ENCODE measurements at regions of chr6 and their contacts with region 1.

Region 1: DNA sequence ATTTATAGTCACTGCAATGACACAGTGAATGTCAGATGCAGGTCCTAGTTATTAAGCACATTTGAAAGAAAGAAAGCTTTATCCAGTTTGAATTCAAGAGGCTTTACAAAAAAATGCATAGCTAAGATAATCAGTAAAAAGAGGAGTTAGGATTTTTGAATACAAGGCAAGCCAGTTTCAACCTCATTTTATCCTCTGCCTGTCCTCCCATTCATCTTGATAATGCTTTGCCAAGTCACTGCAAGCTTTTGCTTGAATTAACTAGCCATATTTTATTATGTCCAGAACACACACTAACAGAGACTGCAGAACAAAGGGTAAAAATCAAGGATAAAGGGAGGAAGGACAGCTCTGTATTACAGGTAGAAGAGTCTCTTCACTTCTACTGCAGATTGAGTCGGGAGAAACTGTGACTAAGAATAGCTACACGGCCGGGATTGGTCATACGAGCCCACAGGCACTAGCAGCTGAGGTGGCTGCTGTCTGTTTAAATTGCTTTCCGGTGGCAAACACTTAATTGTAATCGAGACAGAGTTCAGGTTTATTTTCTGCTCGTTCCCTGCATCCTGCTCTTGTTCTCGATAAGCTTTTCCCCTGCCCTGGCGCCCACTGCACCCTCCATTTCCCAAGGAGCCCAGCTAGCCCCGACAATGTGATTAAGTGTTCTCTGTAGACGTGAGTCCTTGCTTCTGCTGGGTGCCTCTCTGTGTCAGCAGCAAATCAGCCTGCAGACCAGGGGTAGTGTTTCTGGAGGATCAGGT is 30.5 kb upstream of the AKAP12 start:
- DNase-seq: peak; percentile 24
- ATAC-seq: peak; percentile 82
- H3K4me3 ChIP-seq: peak overlapping the region; percentile 36 to 62 (median 37)
- H3K27ac ChIP-seq: peak overlapping the region; percentile 14
- H3K4me1 ChIP-seq: peaks cover 45% of the 10 kb centered on the region
- H3K27me3 ChIP-seq: no peaks in the 10 kb centered on the region
- CTCF ChIP-seq: no peak
- EP300 ChIP-seq: no peak
- POLR2A ChIP-seq: no peak
- RAD21 ChIP-seq: no peak

Region 2: DNA sequence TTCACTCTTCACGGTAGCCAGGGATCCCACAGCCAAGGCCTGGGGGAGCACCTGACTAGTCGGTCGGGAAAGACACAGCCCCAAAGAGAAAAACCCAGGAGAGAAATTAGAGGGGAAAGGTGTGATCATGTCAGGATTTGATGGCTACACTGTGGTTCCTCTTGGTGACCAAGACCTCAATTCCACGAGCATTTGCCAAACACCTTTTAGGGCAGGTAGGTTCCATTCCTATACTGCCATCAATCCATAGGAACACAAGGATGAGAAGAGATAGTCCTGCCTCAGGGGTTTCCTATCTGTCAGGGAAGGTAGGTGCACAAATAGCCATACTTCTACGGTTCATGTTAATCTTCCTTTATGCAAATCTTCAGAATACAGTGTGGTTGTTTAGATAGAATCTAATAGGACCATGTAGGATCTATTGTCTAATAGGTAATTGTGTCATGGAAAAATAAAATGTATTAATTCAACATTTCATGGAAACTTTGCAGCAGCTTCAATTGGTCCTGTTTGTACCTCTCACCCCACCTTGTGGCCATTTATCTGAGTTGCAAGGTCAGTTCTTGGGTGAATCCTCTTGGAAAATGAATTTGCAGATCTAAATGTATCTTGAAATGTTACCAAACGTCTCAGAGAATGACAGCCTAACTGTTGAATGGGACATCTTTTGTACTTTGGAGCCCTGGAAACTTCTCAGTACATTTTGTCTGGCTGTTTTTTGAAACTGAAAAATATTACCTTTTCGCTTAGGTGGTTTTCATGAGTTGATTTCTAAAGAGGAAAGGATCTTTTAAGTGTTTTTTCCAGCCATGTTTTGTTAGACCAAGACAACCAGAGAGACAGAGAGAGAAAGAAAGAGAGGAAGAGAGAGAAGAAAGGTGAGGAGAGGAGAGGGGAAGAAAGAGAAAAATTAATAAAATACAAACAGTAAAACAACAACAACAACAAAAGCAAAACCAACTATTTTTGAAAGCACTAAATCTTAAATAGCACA is 874.2 kb before region 1 on chr6:
- CTCF ChIA-PET with region 1: no interaction called
- POLR2A ChIA-PET with region 1: no interaction called
- in situ Hi-C with region 1: no loop called
- intact Hi-C with region 1: no loop called
- DNase-seq: peak; percentile 52
- ATAC-seq: peak; percentile 50; the same call in 1 of the 3 replicates
- H3K4me3 ChIP-seq: no peak overlapping the region
- H3K27ac ChIP-seq: no peak overlapping the region
- H3K4me1 ChIP-seq: no peaks in the 10 kb centered on the region
- H3K27me3 ChIP-seq: peaks cover 0 to 8% of the 10 kb centered on the region in 2 experiments; a peak in 2 of 5 replicates
- CTCF ChIP-seq: peak; percentile 73
- EP300 ChIP-seq: no peak
- POLR2A ChIP-seq: no peak
- RAD21 ChIP-seq: peak; percentile 71

Region 3: DNA sequence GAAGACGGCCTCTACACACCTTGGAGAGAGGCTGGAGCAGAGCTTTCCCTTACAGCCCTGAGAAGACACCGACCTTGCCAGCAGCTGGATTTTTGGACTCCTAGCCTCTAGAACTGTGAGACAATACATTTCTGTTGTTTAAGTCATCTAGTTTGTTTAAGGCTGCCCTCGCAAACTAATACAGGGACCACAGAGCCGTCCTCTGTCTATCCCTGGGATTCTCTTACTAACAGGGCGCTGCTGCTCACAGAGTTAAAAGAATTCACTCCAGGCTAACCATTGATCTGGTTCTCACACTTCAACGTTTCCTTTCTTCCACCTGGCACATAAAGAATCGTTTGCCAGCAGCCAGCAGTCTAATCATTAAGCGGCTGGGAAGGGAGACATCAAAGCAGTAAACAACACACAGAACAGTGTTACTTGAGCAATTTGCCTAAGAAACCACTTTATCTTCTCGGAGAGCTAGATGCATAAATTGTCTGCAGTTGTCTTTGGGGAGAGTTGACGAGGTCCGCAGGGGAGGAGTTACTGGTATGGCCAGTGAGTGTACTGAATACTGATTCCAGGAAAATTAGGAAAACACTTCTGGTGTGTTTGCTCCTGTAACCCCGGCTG is 73.0 kb before region 1 on chr6:
- CTCF ChIA-PET with region 1: no interaction called
- POLR2A ChIA-PET with region 1: no interaction called
- in situ Hi-C with region 1: no loop called
- intact Hi-C with region 1: loop called (anchors 5 kb)
- DNase-seq: peak; percentile 77
- ATAC-seq: peak; percentile 94
- H3K4me3 ChIP-seq: peak overlapping the region; percentile 41 to 59 (median 49); a peak in 5 of 6 replicates
- H3K27ac ChIP-seq: peak overlapping the region; percentile 30
- H3K4me1 ChIP-seq: peaks cover 25% of the 10 kb centered on the region
- H3K27me3 ChIP-seq: no peaks in the 10 kb centered on the region
- CTCF ChIP-seq: no peak
- EP300 ChIP-seq: 0 out of 4 replicates have a peak, but pooled peaks of 1 of the 2 experiments have one; percentile 21
- POLR2A ChIP-seq: no peak
- RAD21 ChIP-seq: no peak

Region 4: DNA sequence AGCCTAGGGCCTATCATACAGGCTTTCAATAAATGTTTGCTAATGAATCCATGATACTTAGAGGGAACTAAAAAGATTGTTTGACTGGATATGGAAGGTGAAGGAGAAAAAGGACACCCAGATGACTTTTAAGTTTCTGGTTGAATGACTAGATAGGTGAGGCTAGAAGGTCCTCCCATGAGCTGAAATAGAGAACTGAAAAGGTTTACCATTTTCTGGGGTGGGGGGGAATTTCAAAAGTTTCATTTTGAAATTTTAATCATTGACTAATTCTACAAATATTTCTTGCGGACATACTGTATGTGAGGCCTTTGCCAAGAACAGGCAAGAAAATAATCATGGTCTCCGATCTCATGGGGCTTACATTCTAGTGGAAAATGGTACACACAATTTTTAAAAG is 200.0 kb after region 1 on chr6:
- CTCF ChIA-PET with region 1: no interaction called
- POLR2A ChIA-PET with region 1: no interaction called
- in situ Hi-C with region 1: no loop called
- intact Hi-C with region 1: no loop called
- DNase-seq: no peak
- ATAC-seq: no peak
- H3K4me3 ChIP-seq: no peak overlapping the region
- H3K27ac ChIP-seq: no peak overlapping the region
- H3K4me1 ChIP-seq: no peaks in the 10 kb centered on the region
- H3K27me3 ChIP-seq: no peaks in the 10 kb centered on the region
- CTCF ChIP-seq: no peak
- EP300 ChIP-seq: no peak
- POLR2A ChIP-seq: no peak
- RAD21 ChIP-seq: no peak

Measured in HepG2 (cell line).